ENCODE measurements at regions of chr1 and their contacts with region 1.

Region 1: GRCh38 chr1:29033829-29034466 is 89.8 kb downstream of the TMEM200B start:
- DNase-seq: no peak
- H3K4me3 ChIP-seq: no peak overlapping the region
- H3K27ac ChIP-seq: no peak overlapping the region
- H3K4me1 ChIP-seq: no peaks in the 10 kb centered on the region
- H3K27me3 ChIP-seq: no peaks in the 10 kb centered on the region
- CTCF ChIP-seq: peak; percentile 53 to 86 (median 76)
- POLR2A ChIP-seq: no peak

Region 2: DNA sequence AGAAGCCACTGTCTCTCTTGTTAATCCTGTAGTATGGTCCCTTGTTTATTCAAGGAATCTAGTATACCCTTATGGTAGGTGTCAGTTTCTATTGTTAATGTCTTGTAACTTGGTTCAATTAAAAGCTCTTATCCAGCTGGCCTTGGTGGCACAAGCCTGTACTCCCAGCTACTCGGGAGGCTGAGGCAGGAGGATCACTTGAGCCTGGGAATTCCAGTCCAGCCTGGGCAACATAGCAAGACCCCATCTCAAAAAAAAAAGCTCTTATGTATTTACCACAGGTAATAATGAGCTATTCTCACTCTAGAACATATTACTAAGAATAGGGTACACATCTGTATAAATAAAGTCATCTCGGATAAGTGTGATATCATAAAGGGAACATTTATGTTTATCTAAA is 43.2 kb after region 1 on chr1:
- intact Hi-C with region 1: no loop called
- DNase-seq: no peak
- H3K4me3 ChIP-seq: no peak overlapping the region
- H3K27ac ChIP-seq: no peak overlapping the region
- H3K4me1 ChIP-seq: no peaks in the 10 kb centered on the region
- H3K27me3 ChIP-seq: no peaks in the 10 kb centered on the region
- CTCF ChIP-seq: no peak
- POLR2A ChIP-seq: no peak

Region 3: GRCh38 chr1:29197585-29197924 is 163.6 kb after region 1 on chr1:
- intact Hi-C with region 1: loop called (anchors 10 kb)
- DNase-seq: peak in 1 of 7 donors; percentile 72
- H3K4me3 ChIP-seq: no peak overlapping the region
- H3K27ac ChIP-seq: no peak overlapping the region
- H3K4me1 ChIP-seq: peaks cover 7 to 9% of the 10 kb centered on the region in 2 donors
- H3K27me3 ChIP-seq: no peaks in the 10 kb centered on the region
- CTCF ChIP-seq: peak in 1 of 6 experiments; percentile 11
- POLR2A ChIP-seq: no peak

Region 4: DNA sequence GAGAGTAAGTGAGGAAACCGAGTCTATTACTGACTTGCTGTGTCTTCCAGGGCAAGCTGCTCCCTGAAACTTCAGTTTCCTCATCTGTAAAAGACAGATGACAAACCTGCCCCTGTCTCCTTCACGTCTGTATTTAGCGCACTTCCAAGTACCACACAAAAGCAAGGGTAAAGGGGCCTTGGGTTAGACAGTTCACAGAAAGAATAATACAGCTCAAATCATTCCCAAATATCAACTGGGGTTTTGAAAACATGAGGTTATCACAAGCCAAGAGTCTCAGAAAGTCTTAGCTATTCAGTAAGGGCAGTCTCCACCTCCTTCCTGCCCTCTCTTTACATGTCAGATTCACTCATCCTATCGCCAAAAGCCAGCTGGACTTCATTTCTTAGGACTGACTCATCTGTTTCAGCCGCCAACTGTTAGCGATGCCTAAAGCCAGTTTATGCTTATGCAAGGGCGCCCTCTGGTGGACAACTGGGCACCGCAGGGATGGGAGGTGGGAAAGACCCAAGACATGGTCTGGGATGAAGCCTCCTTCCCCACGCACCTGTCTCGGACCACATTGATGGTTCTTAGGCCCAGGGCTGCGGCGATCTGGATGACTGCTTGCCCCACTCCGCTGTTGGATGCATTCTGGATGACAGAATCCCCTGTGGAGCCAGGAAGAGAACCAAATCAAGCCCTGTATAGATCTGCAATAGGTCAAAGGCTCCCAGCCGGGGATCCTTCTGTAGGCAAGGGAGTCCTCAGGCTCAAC is 168.8 kb after region 1 on chr1:
- intact Hi-C with region 1: loop called (anchors 10 kb)
- DNase-seq: peak; percentile 94 to 98 (median 97)
- H3K4me3 ChIP-seq: no peak overlapping the region
- H3K27ac ChIP-seq: peak overlapping the region in 4 of 5 donors; percentile 6 to 84 (median 71)
- H3K4me1 ChIP-seq: peaks cover 8 to 11% of the 10 kb centered on the region in 2 donors
- H3K27me3 ChIP-seq: no peaks in the 10 kb centered on the region
- CTCF ChIP-seq: peak; percentile 96 to 98 (median 97)
- POLR2A ChIP-seq: no peak